Natural killer cell (primary cell): ENCODE measurements at regions of chr4 and their contacts with region 1.

Region 1: DNA sequence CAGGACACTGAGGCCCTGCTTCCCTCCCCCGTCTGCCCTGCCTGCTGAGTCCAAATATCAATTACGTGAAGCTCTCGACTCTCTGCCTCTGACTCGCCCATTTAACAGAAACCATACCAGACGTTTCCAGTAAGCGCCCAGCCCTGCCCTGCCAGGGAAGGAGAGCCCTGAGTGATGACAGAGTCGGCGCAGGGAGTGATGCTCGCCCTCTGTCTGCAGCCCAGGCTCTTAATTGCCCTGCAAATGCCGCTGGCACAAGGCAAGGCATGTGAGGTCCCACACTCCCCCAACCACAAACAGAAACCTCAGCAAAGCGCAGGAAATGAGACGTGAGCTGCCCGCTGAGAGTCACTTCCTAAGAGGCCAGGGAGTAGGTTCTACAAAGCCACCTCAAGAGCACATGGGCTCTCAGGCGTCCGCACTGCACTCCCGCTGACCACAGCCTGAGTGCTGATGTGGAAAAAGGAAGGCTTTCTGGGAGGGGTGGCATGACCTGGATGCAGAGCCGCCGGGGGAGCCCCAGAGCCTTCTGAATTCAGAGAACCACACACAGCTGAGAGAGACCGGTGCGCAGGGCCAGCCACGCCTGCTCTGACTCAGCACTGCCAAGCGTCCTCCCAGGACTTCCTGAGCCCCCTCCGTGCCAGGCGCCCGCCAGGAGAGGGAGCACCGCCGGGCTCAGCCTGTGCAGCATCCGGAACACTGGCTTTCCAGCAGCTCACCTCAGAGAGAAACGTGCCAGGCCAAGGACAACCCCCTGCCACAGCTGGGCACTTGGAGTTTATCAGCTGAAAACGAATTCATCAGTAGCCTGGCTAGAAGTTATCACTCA is 5.3 kb downstream of the ZFYVE28 start:
- DNase-seq: peak; percentile 86 to 97
- ATAC-seq: peak; percentile 76 to 90 (median 76)
- H3K4me3 ChIP-seq: peak overlapping the region; percentile 35
- H3K4me3 Mint-ChIP-seq: peak overlapping the region; percentile 98
- H3K27ac ChIP-seq: peak overlapping the region; percentile 88
- H3K27ac Mint-ChIP-seq: peak overlapping the region; percentile 96 to 100
- H3K4me1 ChIP-seq: peaks cover 79% of the 10 kb centered on the region
- H3K4me1 Mint-ChIP-seq: peaks cover 63 to 80% of the 10 kb centered on the region in 2 donors
- H3K27me3 ChIP-seq: peaks cover 12% of the 10 kb centered on the region
- H3K27me3 Mint-ChIP-seq: no peaks in the 10 kb centered on the region
- CTCF ChIP-seq: peak; percentile 23

Region 2: DNA sequence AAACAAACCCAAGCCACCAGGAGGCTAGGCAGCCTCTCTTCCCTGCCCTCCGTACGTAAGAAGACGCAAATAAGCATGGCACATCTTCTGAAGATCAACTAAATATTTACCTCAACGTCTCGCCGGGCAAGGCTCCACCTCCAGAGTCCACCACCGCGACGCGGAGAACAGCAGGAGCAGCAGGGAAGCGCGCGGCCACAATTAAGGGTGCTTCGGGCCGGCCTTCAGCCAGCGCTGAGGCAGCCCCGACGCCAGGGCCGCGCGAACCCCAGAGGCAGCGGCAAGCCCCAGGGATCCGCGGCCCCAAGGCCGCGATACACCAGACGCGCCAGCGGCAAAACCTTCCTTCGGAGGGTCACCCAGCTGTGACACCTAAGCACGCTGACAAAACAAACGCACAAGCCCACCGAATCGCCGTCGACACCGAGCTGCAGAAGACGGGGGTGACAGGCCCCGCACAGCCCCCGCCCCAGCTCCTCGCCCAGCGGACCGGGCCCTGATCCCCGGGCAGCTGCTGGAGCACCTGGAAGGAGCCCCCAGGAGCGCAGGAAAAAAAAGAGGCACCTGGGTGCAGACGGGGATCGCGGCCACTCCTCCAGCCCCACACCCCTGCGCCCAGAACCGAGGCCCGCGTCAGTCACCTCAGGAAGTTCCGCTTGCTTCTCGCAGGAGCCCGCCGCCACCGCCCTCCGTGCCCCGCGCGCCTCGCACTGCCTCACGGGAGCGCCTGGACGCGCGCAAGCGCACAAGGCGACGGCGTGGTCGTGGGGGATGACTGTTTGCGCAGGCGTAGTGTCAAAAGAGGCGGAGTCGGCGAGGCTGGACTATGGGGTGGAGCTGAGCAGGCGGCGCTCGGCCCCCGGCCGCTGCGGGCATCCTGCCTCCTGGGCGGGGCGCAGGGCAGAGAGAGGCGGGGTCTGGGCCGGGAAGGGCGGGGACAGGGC is 171.4 kb before region 1 on chr4 and contains the starts of genes HAUS3 and POLN:
- intact Hi-C with region 1: loop called (anchors 1 kb)
- DNase-seq: peak; percentile 99 to 100
- ATAC-seq: peak; percentile 92 to 99 (median 95)
- H3K4me3 ChIP-seq: peak within 1 kb of the TSS; percentile 95
- H3K4me3 Mint-ChIP-seq: peak within 1 kb of the TSS; percentile 93
- H3K27ac ChIP-seq: peak within 1 kb of the TSS; percentile 66
- H3K27ac Mint-ChIP-seq: peak within 1 kb of the TSS; percentile 90 to 91
- H3K4me1 ChIP-seq: peaks cover 21% of the 10 kb centered on the region
- H3K4me1 Mint-ChIP-seq: peaks cover 46 to 64% of the 10 kb centered on the region in 2 donors
- H3K27me3 ChIP-seq: no peaks in the 10 kb centered on the region
- H3K27me3 Mint-ChIP-seq: no peaks in the 10 kb centered on the region
- CTCF ChIP-seq: no peak
- total RNA-seq, gene HAUS3: 38.0 to 50.3 (median 49.4) TPM
- total RNA-seq, gene POLN: 2.6 to 6.9 (median 3.3) TPM

Region 3: DNA sequence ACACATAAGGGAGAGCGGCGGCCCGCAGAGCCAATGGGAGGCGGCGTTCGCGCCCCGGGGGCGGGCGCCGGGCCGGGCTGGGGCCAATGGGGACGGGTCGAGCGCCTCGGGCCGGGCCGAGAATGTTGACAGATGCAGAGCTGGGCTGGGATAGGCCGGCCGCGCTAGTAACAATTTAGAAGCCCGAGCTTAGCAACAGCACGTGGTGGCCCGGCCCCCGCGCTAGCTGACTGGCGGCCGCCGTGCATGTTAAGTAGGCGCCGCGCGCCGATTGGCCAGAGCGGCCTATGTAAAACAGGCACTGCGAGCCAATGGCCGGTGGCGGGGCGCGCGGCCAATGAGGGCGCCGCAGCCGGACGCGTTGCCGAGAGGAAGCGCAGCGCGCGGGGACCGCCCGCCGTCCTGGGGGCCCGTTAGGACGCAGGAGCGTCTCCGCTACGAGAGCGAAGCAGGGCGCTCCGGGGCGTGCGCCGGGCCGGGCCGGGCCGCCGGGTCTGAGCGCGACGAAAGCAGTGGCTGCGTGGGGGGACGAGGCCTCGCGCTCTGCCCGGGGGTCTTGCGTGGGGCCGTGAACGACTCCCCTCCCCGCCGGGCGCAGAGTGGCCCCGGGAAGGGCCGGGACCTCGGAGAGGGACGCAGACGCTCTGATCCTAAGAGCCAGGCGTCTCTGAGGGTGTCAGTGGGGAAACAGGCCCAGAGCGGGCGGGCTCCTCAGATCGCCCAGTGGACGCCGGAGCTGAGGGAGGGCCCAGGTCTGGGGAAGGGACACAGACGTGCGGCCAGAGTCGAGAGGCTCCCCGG is 150.8 kb before region 1 on chr4:
- intact Hi-C with region 1: loop called (anchors 1 kb)
- DNase-seq: peak; percentile 98
- ATAC-seq: peak; percentile 86 to 95 (median 86)
- H3K4me3 ChIP-seq: peak overlapping the region; percentile 82
- H3K4me3 Mint-ChIP-seq: peak overlapping the region; percentile 89
- H3K27ac ChIP-seq: peak overlapping the region; percentile 99
- H3K27ac Mint-ChIP-seq: peak overlapping the region; percentile 73 to 89
- H3K4me1 ChIP-seq: peaks cover 39% of the 10 kb centered on the region
- H3K4me1 Mint-ChIP-seq: peaks cover 0 to 5% of the 10 kb centered on the region in 2 donors
- H3K27me3 ChIP-seq: no peaks in the 10 kb centered on the region
- H3K27me3 Mint-ChIP-seq: no peaks in the 10 kb centered on the region
- CTCF ChIP-seq: no peak

Region 4: DNA sequence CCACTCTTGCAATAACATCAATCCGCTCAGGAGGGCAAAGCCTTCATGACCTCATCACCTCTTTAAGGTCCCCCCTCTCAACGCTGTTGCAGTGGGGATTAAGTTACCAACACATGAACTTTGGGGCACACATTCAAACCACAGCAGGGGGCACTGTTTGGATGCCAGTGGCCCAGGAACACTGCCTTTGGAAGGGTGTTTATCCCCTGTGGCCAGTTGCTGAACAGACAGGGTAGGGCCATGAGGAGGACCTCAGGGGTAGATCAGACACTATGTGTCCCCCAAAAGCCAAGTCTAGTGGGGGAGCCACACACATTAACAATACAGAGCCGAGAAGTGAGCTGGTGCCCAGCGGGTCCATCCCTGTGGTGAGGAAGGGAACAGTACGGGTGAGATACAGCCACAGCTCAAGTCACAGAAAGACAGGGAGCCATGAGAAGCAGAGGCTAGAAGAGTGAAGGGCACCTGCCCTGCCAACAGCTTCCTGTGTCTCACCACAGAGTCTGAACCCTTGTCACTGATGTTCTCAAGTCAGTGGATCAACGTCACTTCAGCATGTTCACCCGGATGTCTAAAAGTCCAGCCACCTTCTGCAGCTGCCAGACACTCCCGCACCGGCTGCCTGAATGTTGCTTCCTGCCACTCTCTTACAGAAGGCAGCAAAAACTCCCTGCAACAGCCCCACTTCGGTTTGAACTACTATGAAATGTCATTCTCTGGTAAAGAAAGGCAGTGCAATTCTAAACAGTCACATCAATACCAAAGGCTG is 131.3 kb before region 1 on chr4:
- intact Hi-C with region 1: loop called (anchors 1 kb)
- DNase-seq: peak; percentile 79 to 97
- ATAC-seq: peak; percentile 85 to 94 (median 87)
- H3K4me3 ChIP-seq: no peak overlapping the region
- H3K4me3 Mint-ChIP-seq: peak overlapping the region; percentile 76
- H3K27ac ChIP-seq: peak overlapping the region; percentile 89
- H3K27ac Mint-ChIP-seq: peak overlapping the region; percentile 95 to 97
- H3K4me1 ChIP-seq: peaks cover 33% of the 10 kb centered on the region
- H3K4me1 Mint-ChIP-seq: peaks cover 27 to 46% of the 10 kb centered on the region in 2 donors
- H3K27me3 ChIP-seq: no peaks in the 10 kb centered on the region
- H3K27me3 Mint-ChIP-seq: no peaks in the 10 kb centered on the region
- CTCF ChIP-seq: peak; percentile 27

Region 5: GRCh38 chr4:2290974-2291704 is 122.0 kb before region 1 on chr4:
- intact Hi-C with region 1: loop called (anchors 1 kb)
- DNase-seq: peak; percentile 78 to 95
- ATAC-seq: peak; percentile 88 to 92 (median 92)
- H3K4me3 ChIP-seq: no peak overlapping the region
- H3K4me3 Mint-ChIP-seq: peak overlapping the region; percentile 87
- H3K27ac ChIP-seq: peak overlapping the region; percentile 72
- H3K27ac Mint-ChIP-seq: peak overlapping the region; percentile 95
- H3K4me1 ChIP-seq: peaks cover 39% of the 10 kb centered on the region
- H3K4me1 Mint-ChIP-seq: peaks cover 11 to 24% of the 10 kb centered on the region in 2 donors
- H3K27me3 ChIP-seq: no peaks in the 10 kb centered on the region
- H3K27me3 Mint-ChIP-seq: no peaks in the 10 kb centered on the region
- CTCF ChIP-seq: no peak

Region 6: GRCh38 chr4:2354118-2354517 is 59.0 kb before region 1 on chr4:
- intact Hi-C with region 1: loop called (anchors 2 kb)
- DNase-seq: peak in 1 of 2 donors; percentile 69
- ATAC-seq: peak in 2 of 3 donors; percentile 51 to 63
- H3K4me3 ChIP-seq: no peak overlapping the region
- H3K4me3 Mint-ChIP-seq: no peak overlapping the region
- H3K27ac ChIP-seq: no peak overlapping the region
- H3K27ac Mint-ChIP-seq: peak overlapping the region in 1 of 2 donors; percentile 80
- H3K4me1 ChIP-seq: peaks cover 17% of the 10 kb centered on the region
- H3K4me1 Mint-ChIP-seq: peaks cover 5 to 12% of the 10 kb centered on the region in 2 donors
- H3K27me3 ChIP-seq: no peaks in the 10 kb centered on the region
- H3K27me3 Mint-ChIP-seq: no peaks in the 10 kb centered on the region
- CTCF ChIP-seq: peak; percentile 31

Region 7: GRCh38 chr4:2468445-2469192 is 55.5 kb after region 1 on chr4 and contains the start of gene RNF4:
- intact Hi-C with region 1: loop called (anchors 2 kb)
- DNase-seq: peak; percentile 92 to 98
- ATAC-seq: peak; percentile 84 to 93 (median 88)
- H3K4me3 ChIP-seq: peak within 1 kb of the TSS; percentile 87
- H3K4me3 Mint-ChIP-seq: peak within 1 kb of the TSS; percentile 97
- H3K27ac ChIP-seq: peak within 1 kb of the TSS; percentile 87
- H3K27ac Mint-ChIP-seq: peak within 1 kb of the TSS; percentile 97 to 98
- H3K4me1 ChIP-seq: peaks cover 38% of the 10 kb centered on the region
- H3K4me1 Mint-ChIP-seq: peaks cover 48 to 57% of the 10 kb centered on the region in 2 donors
- H3K27me3 ChIP-seq: no peaks in the 10 kb centered on the region
- H3K27me3 Mint-ChIP-seq: no peaks in the 10 kb centered on the region
- CTCF ChIP-seq: no peak
- total RNA-seq, gene RNF4: 103 to 130 (median 123) TPM

Region 8: DNA sequence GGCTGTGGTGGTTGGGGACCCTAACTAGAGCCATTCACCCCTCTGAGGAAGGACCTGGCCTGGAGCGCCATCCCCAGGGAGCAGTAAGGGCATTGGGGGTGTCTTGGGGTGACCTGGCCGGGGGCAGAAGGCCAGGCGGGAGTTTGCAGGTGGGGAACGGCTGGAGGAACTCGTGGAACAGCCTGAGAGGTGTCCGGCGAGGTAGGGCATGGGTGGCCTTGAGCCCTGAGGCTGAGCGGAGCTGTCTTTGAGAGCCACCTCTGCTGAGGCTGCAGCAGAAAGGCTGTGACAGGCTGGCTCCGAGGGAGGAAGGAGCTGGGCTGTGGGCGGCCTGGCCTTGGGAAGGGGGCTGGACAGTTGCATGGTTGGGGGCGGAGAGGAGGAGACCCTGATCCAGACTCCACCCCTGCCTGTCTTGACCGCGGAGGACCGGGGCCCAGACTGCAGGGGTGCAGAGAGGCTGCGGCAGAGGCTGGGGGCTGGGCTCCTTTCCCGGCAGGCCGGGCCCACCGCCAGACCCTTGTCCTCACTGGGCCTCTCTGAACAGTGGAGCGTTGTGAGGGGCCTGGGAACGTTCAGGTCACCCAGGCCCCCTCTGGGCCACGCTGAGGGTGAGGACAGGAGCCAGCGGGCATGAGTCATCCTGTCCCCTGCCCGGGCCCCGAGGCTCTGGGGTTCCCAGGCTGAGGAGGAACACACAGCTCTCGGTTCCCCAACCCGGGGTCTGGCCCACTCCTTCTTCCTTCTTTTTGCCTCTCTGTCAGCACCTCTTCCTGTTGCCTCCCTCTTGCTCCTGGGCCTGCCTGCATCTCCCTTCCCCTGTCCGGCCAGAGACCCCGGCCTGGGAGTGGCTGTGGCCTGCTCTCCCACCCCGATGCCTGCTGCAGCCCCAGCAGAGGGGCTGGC is 387.8 kb after region 1 on chr4:
- intact Hi-C with region 1: no loop called
- DNase-seq: no peak
- ATAC-seq: peak; percentile 16 to 56 (median 18)
- H3K4me3 ChIP-seq: peak overlapping the region; percentile 16
- H3K4me3 Mint-ChIP-seq: no peak overlapping the region
- H3K27ac ChIP-seq: peak overlapping the region; percentile 61
- H3K27ac Mint-ChIP-seq: peak overlapping the region in 1 of 2 donors; percentile 64
- H3K4me1 ChIP-seq: peaks cover 83% of the 10 kb centered on the region
- H3K4me1 Mint-ChIP-seq: peaks cover 23 to 48% of the 10 kb centered on the region in 2 donors
- H3K27me3 ChIP-seq: no peaks in the 10 kb centered on the region
- H3K27me3 Mint-ChIP-seq: no peaks in the 10 kb centered on the region
- CTCF ChIP-seq: no peak